Heart left ventricle (tissue), 16 donors: ENCODE measurements at regions of chr6 and their contacts with region 1.

Region 1: GRCh38 chr6:64330694-64331307 is 695.2 kb downstream of the PHF3 start:
- DNase-seq: peak in 4 of 5 donors; percentile 31 to 65 (median 47)
- ATAC-seq: no peak
- H3K4me3 ChIP-seq: no peak overlapping the region
- H3K27ac ChIP-seq: no peak overlapping the region
- H3K4me1 ChIP-seq: no peaks in the 10 kb centered on the region
- H3K27me3 ChIP-seq: no peaks in the 10 kb centered on the region
- CTCF ChIP-seq: peak in 11 of 12 donors; percentile 19 to 70 (median 45)
- POLR2A ChIP-seq: no peak

Region 2: DNA sequence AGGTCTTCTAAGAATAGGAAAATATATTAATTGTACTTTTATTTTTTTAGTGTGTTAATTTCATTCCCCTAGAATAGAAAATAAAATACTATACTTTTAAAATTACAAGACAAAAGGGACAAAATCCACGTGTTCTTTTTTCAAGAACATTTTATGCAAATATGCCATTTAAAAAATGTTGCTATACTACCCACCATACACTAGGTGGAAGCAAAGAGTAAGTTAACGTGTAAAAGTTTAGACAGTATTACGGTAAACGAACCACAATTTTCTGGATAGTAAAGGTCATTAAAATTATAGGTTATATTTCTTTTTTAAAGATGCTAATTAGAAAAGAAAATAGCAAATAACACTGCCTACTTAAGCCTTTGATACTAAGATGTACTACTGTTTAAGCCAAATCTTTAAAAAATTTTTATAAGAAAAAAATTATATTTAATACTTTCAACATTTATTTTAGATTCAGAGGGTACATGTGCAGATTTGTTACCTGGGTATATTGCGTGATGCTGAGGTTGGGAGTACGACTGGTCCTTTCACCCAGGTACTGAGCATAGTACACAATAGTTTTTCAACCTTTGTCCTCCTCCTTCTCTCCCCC is 407.6 kb before region 1 on chr6:
- intact Hi-C with region 1: loop called in 6 of 10 experiments (anchors 2 to 10 kb)
- DNase-seq: no peak
- ATAC-seq: peak in 2 of 4 donors; percentile 53 to 60
- H3K4me3 ChIP-seq: no peak overlapping the region
- H3K27ac ChIP-seq: no peak overlapping the region
- H3K4me1 ChIP-seq: no peaks in the 10 kb centered on the region
- H3K27me3 ChIP-seq: no peaks in the 10 kb centered on the region
- CTCF ChIP-seq: peak; percentile 50 to 75 (median 58)
- POLR2A ChIP-seq: no peak

Region 3: GRCh38 chr6:64012351-64013001 is 318.3 kb before region 1 on chr6:
- intact Hi-C with region 1: loop called in 6 of 10 experiments (anchors 2 to 10 kb)
- DNase-seq: no peak
- ATAC-seq: peak; percentile 37 to 73 (median 58)
- H3K4me3 ChIP-seq: peak overlapping the region in 7 of 12 donors; percentile 3 to 25 (median 10)
- H3K27ac ChIP-seq: no peak overlapping the region
- H3K4me1 ChIP-seq: peaks cover 0 to 8% (median 0%) of the 10 kb centered on the region in 12 donors
- H3K27me3 ChIP-seq: no peaks in the 10 kb centered on the region
- CTCF ChIP-seq: peak in 10 of 12 donors; percentile 13 to 70 (median 38)
- POLR2A ChIP-seq: no peak